ENCODE measurements at regions of chr5 and their contacts with region 1.

Region 1: DNA sequence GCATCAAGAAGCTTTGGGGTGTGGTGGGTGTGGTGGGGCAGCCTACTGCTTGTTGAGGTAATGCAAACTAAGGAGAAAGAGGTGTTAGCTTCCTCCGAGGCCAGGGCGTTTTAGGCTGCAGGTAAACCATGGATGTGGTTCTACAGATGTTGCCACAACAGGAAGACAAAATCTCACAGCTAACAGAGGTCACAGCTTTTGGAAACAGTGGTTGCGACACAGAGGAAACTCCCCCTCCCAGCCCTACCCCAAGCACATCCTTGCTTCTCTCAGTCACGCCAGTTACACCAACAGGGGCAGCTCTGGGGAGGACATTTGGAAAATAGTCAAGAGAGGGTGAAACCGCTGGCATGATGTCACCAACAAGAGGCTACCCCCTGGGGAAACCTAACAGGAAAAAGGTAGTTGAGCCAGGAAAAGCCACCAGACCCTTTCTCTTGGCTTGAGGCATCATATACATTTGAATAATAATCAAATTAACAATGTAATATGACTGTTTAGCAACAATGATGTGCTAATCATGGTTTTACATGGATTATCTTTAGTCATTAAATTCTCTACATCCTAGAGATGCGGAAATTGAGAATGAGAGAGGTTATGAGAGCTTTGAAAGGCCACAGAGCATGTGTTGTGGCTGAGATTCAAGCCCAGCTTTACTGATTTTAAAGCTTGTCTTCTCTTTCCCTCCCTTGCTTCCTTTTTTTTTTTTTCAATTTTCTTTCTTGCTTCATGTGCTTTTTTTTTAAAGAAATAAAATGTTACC is 82.2 kb upstream of the IL12B start:
- DNase-seq: peak; percentile 92
- ATAC-seq: peak; percentile 94
- H3K4me3 Mint-ChIP-seq: peak overlapping the region; percentile 60
- H3K27ac Mint-ChIP-seq: peak overlapping the region; percentile 91
- H3K4me1 Mint-ChIP-seq: peaks cover 62% of the 10 kb centered on the region
- H3K27me3 Mint-ChIP-seq: peaks cover 9% of the 10 kb centered on the region

Region 2: GRCh38 chr5:159341914-159342313 is 70.6 kb before region 1 on chr5:
- CTCF ChIA-PET with region 1: interaction called, 17 read pairs
- POLR2A ChIA-PET with region 1: interaction called, 12 read pairs
- DNase-seq: peak; percentile 65
- ATAC-seq: peak; percentile 38
- H3K4me3 Mint-ChIP-seq: no peak overlapping the region
- H3K27ac Mint-ChIP-seq: peak overlapping the region; percentile 79
- H3K4me1 Mint-ChIP-seq: peaks cover 59% of the 10 kb centered on the region
- H3K27me3 Mint-ChIP-seq: peaks cover 6% of the 10 kb centered on the region

Region 3: DNA sequence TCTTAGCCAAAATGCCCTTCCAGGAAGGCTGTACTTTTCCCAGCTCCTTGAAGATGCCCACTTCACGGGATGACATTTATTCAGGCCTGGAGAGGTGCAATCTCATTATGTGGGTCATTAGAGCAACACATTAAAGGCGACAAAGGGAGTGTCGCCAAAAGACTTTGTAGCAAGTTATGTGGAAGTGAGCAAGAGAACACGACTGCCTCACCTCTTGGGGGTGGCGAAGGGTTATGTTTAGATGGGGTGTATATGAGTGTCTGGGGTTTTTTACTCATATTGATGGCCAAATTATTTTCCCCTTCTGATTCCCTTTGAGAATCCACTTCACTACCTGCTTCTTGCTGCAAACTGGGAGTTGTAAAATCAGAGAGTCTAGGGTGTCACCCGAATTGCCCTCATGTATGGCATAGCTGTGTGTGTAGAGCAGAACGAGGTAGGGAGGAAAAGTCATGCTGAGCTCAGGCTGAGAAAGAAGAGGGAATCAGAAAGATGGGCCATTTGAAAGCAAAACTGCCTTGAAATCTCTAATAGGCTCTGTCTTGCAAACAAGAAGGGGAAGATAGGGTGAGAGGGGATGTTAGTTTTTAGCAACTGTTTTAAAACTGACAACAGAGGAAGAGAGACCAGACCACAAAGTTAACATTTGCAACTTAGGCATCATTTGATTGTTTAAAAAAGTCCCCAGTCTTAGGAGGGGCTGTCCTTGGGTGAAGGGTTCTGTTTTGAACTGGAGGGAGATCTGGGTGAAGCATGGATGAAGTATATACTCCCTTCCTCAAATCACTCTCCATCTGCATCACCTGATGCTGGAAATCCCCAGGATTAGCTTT is 14.9 kb after region 1 on chr5:
- CTCF ChIA-PET with region 1: interaction called, 36 read pairs
- POLR2A ChIA-PET with region 1: interaction called, 21 read pairs
- DNase-seq: no peak
- ATAC-seq: peak; percentile 23
- H3K4me3 Mint-ChIP-seq: peak overlapping the region; percentile 4
- H3K27ac Mint-ChIP-seq: peak overlapping the region; percentile 72
- H3K4me1 Mint-ChIP-seq: peaks cover 32% of the 10 kb centered on the region
- H3K27me3 Mint-ChIP-seq: peaks cover 21% of the 10 kb centered on the region